Right ventricle myocardium superior (tissue), 1 donor: ENCODE measurements at regions of chr5 and their contacts with region 1.

Region 1: GRCh38 chr5:148740966-148741742 is 85.3 kb upstream of the ADRB2 start:
- DNase-seq: no peak
- ATAC-seq: peak; percentile 86

Region 2: DNA sequence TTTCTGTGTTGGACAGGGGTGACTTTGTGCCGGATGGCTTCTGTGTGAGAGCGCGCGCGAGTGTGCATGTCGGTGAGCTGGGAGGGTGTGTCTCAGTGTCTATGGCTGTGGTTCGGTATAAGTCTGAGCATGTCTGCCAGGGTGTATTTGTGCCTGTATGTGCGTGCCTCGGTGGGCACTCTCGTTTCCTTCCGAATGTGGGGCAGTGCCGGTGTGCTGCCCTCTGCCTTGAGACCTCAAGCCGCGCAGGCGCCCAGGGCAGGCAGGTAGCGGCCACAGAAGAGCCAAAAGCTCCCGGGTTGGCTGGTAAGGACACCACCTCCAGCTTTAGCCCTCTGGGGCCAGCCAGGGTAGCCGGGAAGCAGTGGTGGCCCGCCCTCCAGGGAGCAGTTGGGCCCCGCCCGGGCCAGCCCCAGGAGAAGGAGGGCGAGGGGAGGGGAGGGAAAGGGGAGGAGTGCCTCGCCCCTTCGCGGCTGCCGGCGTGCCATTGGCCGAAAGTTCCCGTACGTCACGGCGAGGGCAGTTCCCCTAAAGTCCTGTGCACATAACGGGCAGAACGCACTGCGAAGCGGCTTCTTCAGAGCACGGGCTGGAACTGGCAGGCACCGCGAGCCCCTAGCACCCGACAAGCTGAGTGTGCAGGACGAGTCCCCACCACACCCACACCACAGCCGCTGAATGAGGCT is 85.0 kb after region 1 on chr5 and contains the start of gene ADRB2:
- intact Hi-C with region 1: loop called (anchors 10 kb)
- DNase-seq: peak; percentile 97
- ATAC-seq: peak; percentile 95
- total RNA-seq, gene ADRB2: 5.6 TPM

Region 3: GRCh38 chr5:148836272-148837250 is 95.4 kb after region 1 on chr5:
- intact Hi-C with region 1: no loop called
- DNase-seq: no peak
- ATAC-seq: no peak

Region 4: DNA sequence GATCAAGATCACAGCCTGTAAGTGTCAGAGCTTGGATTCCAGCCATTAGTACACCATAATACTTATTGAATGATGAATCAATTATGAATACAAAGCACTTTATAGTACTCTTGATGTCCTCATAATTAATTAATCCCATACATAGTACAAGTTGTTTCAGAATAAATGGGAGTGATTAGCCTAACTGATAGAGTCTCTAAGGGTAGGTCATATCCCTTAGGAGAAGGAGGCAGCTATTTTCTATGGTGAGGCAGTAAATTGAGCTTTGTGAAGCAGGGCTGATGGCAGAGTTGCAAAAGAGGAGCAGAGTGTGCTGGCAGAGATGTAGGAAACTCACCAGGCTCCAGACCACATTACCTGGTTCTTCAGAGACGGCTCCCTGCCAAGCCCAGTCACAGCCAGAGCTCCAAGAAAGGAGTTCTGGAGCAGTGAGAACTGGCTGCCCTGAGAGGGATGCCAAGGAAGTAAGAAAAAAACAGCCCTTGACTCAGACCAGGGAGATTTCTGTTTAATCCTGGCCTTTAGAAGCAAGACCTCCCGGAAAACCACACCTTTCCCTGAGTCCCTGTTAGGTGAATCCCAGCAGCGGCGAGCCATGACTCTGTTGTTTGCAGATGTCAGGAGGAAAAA is 208.8 kb after region 1 on chr5:
- intact Hi-C with region 1: loop called (anchors 5 kb)
- DNase-seq: peak; percentile 68
- ATAC-seq: peak; percentile 93

Region 5: DNA sequence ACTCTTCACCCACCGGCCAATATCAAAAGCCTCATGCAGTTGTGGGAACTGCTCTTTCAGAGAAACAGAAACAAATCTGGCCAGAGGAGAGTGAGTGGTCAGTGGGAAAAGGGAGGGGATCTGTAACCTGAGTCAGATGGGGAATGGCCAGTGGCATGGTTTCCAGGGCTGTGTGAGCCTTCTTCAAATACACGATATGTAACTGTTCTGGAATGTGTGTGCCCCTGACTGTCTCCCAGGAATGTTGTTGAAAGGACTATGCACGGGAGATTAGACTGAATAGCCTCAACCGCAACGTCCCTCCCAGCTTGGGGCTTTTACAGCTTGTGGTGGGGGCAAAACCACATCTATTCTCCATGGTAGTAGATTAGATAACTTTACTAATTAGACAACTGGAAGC is 260.9 kb after region 1 on chr5:
- intact Hi-C with region 1: loop called (anchors 5 kb)
- DNase-seq: no peak
- ATAC-seq: peak; percentile 68

Region 6: GRCh38 chr5:149141224-149141956 is 400.2 kb after region 1 on chr5 and contains the start of gene ABLIM3:
- intact Hi-C with region 1: no loop called
- DNase-seq: peak; percentile 87
- ATAC-seq: peak; percentile 90
- total RNA-seq, gene ABLIM3: 131 TPM